AG04450 (cell line): ENCODE measurements at regions of chr6 and their contacts with region 1.

Region 1: DNA sequence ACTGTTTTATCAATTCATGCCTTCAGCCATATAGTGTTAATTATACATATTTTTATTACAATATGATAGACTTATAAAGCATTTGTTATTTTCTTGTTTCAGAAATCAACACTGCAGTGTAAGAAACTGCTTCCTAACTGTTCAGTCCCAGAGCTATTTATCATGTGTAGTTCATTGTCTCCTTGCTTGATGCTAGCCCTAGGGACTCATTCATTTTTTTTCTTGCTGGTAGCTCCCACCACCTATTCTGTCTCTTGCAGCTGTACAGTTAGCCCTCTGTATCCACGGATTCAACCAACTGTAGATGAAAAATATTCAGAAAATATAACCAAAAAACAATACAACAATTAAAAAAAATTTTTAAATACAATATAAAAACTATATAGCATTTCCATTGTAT is 121.3 kb downstream of the STXBP5 start:
- DNase-seq: no peak
- H3K4me3 ChIP-seq: no peak overlapping the region
- H3K27ac ChIP-seq: no peak overlapping the region
- H3K27me3 ChIP-seq: no peaks in the 10 kb centered on the region
- CTCF ChIP-seq: no peak

Region 2: DNA sequence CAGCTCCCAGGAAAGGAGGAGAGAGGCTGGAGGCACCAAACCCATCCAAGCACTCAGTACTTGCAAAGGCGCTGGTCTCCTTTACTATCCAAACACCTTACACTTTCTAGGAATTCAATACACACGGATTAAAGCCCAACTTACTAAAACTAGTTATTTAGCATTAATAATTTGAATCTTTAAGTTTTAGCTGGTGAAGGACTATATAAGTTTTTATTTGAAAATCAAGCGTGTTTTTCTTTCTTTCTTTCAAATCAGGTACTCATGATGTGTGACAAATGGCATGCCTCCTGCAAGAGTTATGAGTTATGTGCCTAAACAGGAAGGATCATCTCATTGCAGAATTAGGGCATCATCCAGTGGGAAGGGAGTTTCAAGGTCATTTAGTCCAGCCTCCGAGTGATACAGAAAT is 463.0 kb before region 1 on chr6:
- CTCF ChIA-PET with region 1: interaction called, 3 read pairs
- POLR2A ChIA-PET with region 1: interaction called, 11 read pairs
- DNase-seq: no peak
- H3K4me3 ChIP-seq: no peak overlapping the region
- H3K27ac ChIP-seq: no peak overlapping the region
- H3K27me3 ChIP-seq: no peaks in the 10 kb centered on the region
- CTCF ChIP-seq: no peak